Common myeloid progenitor, CD34-positive (primary cell): ENCODE measurements at regions of chr1 and their contacts with region 1.

Region 1: GRCh38 chr1:40722636-40723035 is 31.1 kb downstream of the NFYC start:
- DNase-seq: peak in 1 of 3 donors; percentile 15
- H3K4me3 ChIP-seq: no peak overlapping the region
- H3K27ac ChIP-seq: no peak overlapping the region
- H3K4me1 ChIP-seq: no peaks in the 10 kb centered on the region
- H3K27me3 ChIP-seq: no peaks in the 10 kb centered on the region

Region 2: DNA sequence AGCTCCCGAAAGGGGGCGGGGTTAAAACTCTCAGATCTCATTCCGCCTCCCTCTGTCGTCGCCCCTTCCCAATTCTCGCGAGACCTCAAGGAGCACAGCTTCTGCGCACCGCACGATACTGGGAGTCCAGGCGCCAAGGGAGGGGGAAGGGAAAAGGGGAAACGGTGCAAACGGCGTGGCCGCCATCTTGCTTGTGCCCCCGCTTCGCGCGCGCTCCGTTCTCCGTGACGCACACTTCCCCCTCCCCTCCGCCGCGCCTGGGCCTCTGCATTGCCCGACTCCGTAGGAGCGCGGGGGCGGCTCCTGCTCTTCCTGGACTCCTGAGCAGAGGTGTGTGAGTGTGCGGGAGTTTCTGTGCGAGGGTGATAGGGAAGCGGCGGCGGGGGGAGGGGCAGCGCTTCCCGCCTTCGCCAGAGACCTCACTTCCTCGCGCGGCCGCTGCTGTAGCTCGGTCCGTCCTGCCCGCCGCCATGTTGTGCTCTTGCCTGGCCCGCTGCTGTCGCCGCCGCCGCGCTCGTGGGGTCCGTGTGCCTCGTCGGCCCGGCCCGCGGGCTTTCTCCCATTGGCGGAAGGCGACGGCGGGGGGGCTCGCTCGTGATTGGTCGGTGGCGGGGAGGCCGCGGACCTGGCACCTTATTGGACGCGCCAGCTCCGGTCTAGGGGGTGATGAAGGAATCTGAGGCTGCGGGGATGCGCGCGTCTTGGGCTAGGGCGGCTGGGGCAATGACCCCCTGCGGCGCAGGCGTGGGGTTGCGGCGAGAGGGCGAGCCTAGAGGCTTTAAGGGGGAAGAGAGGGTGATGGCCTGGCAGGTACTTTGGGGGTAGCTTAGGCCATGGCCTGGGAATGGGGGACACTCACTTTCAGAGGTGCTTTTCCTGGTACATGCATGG is 30.9 kb before region 1 on chr1 and contains the start of gene NFYC:
- CTCF ChIA-PET with region 1: interaction called, 34 read pairs
- POLR2A ChIA-PET with region 1: interaction called, 4 read pairs
- DNase-seq: peak; percentile 99 to 100 (median 99)
- H3K4me3 ChIP-seq: peak within 1 kb of the TSS; percentile 61 to 97 (median 85)
- H3K27ac ChIP-seq: peak within 1 kb of the TSS; percentile 95 to 98
- H3K4me1 ChIP-seq: peaks cover 17 to 36% (median 24%) of the 10 kb centered on the region in 4 experiments
- H3K27me3 ChIP-seq: no peaks in the 10 kb centered on the region

Region 3: DNA sequence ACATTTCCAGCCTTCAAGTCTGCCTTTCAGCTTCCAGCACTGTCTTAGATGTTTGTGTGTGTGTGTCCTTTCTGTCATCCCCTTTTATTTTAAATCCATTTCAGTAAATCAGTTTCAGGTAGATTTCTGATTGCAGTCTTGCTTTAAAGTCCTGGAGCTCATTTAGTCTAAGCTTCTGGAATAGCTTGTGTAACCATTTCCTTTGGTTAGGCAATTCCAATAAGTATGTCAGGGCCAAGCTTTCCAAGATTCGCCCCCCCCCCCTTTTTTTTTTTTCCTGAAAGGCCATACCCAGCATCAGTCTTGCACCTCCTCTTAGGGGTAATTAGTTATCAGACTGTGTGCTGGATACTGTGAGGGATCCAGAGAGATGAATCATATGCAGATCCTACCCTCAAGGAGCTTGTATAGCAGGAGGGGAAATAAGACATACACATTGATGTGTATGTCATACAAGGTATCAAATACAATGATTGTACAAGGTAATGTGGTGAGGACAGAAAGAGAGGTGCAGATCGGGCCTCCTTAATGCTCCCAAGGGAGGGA is 10.2 kb after region 1 on chr1:
- CTCF ChIA-PET with region 1: interaction called, 15 read pairs
- POLR2A ChIA-PET with region 1: interaction called, 3 read pairs
- DNase-seq: no peak
- H3K4me3 ChIP-seq: no peak overlapping the region
- H3K27ac ChIP-seq: no peak overlapping the region
- H3K4me1 ChIP-seq: no peaks in the 10 kb centered on the region
- H3K27me3 ChIP-seq: no peaks in the 10 kb centered on the region

Region 4: DNA sequence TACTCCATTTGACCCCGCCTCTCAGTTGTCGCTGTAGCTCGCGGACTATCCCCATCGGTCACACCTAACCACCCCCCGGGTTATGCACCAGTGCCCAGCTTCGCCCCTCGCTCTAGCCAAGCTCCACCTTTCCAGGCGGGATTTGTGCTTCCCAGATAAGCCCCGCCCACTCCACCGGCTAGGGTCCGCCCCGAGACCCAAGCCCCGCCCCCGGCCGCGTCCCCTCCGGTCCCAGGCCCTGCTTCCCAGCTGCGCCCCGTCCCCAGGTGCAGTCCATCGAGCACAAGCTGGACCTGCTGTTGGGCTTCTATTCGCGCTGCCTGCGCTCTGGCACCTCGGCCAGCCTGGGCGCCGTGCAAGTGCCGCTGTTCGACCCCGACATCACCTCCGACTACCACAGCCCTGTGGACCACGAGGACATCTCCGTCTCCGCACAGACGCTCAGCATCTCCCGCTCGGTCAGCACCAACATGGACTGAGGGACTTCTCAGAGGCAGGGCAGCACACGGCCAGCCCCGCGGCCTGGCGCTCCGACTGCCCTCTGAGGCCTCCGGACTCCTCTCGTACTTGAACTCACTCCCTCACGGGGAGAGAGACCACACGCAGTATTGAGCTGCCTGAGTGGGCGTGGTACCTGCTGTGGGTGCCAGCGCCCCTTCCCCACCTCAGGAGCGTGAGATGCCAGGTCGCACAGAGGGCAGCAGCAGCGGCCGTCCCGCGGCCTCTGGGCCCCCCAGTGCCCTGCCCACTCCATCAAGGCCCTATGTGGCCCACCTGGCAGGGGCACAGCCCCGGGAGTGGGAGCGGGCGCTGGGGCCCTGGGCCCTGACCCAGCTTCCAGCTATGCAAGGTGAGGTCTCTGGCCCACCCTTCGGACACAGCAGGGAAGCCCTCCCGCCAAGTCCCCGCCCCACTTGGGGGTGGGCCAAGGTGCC is 115.7 kb after region 1 on chr1:
- CTCF ChIA-PET with region 1: no interaction called
- POLR2A ChIA-PET with region 1: no interaction called
- DNase-seq: no peak
- H3K4me3 ChIP-seq: no peak overlapping the region
- H3K27ac ChIP-seq: no peak overlapping the region
- H3K4me1 ChIP-seq: peaks cover 4 to 33% (median 29%) of the 10 kb centered on the region in 4 experiments
- H3K27me3 ChIP-seq: peaks cover 0 to 1% (median 0%) of the 10 kb centered on the region in 5 experiments

Region 5: GRCh38 chr1:40901886-40902852 is 179.5 kb after region 1 on chr1:
- CTCF ChIA-PET with region 1: no interaction called
- POLR2A ChIA-PET with region 1: no interaction called
- DNase-seq: no peak
- H3K4me3 ChIP-seq: no peak overlapping the region
- H3K27ac ChIP-seq: no peak overlapping the region
- H3K4me1 ChIP-seq: no peaks in the 10 kb centered on the region
- H3K27me3 ChIP-seq: no peaks in the 10 kb centered on the region